GM12878 (cell line): ENCODE measurements at regions of chr19 and their contacts with region 1.

Region 1: DNA sequence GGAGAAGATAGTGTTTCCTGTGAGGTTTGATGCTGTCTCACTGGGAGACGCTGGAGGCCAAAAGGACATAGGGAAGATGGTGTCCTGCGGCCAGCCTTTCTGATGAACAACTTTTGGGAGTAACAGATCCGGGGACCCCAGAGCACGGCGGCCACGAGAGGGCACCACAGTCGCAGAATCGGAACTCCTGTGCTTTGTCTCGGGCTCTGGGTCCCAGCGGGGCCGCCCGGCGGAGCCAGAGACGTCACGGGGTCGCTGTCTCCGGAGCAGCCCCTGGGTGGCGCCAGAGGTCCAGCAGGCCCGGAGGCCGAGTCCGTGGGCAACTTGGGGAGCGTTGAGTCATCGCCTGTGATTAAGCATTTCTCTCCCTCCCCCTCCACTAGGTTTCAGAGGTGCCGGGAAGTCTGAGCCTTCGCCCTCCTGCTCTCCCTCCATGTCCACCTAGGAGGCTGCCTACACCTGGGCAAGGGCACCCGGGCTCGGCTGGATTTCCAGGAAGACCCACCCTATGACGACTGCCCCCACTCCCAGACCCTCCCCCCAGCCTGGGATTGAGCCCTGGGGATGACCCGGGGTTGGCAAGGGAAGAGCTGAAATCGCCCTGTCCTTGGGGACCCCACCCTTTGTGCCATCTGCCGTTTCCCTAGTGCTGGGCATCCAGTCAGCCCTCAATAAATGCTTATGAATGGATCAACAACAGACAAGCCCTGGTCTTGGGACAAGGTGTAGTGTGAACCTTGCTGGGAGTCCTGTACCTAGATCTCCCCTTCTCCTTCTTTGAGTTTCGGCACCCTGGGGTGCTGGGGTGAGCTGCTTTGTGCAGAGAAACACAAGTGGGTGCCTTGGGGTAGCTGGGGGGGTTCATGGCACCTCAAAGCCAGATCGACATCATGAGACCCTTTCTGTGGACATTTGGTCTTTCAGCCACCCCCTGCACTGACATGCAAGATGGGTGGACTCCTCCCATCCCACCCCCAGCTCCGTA is 3.4 kb downstream of the NANOS3 start:
- DNase-seq: peak; percentile 84
- ATAC-seq: peak; percentile 95
- H3K4me3 ChIP-seq: peak overlapping the region; percentile 42
- H3K27ac ChIP-seq: peak overlapping the region; percentile 70
- H3K4me1 ChIP-seq: peaks cover 25% of the 10 kb centered on the region
- H3K27me3 ChIP-seq: no peaks in the 10 kb centered on the region
- CTCF ChIP-seq: peak; percentile 100; a peak in 5 of 6 replicates
- EP300 ChIP-seq: no peak
- POLR2A ChIP-seq: 0 out of 2 replicates have a peak, but pooled peaks have one; percentile 41
- RAD21 ChIP-seq: peak; percentile 98

Region 2: DNA sequence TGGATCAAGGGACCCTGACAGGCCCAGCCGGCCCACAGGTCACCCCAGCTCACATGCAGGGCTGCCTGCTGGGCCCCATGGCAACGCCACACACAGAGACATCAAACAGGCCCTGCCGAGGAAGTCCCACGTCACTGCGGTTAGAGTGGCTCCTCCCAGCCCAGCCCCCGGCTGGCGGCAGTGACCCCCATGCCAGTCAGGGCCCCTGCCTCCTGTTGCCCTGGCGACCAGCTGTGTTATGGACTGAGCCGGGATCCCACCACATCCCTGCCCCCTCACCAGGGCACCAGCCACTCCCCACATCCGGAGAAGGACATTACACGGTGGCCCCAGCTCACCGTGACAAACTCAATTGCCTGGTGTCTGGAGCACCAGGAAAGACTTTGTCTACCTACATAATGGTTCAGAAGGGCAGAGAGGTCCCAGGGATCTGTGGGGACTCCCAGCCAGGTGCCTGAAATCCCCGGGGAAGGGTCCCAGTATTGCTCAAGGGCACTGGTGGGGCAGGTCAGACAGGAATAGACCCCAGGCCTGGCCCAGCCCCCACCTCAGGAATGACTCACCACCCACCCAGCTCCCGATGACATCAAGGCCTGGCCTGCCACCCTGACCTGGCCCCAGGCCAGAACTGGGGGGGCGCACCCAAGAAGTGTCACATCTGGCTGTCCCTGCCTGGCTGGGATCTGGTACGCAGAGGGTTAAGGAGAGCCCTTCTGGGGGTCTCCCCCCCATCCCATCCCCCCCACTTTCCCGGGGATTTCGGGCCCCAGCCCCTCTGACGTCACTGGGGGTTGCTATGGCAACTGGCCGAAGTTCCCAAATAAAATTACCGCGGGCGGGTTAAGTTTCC is 33.6 kb before region 1 on chr19:
- CTCF ChIA-PET with region 1: no interaction called
- POLR2A ChIA-PET with region 1: interaction called, 11 read pairs
- RAD21 ChIA-PET with region 1: interaction called, 3 read pairs
- SMC1A ChIA-PET with region 1: no interaction called
- in situ Hi-C with region 1: no loop called
- intact Hi-C with region 1: no loop called
- DNase-seq: peak; percentile 85
- ATAC-seq: peak; percentile 76
- H3K4me3 ChIP-seq: peak overlapping the region; percentile 64
- H3K27ac ChIP-seq: peak overlapping the region; percentile 91
- H3K4me1 ChIP-seq: peaks cover 41% of the 10 kb centered on the region
- H3K27me3 ChIP-seq: no peaks in the 10 kb centered on the region
- CTCF ChIP-seq: no peak
- EP300 ChIP-seq: peak; percentile 86 to 94
- POLR2A ChIP-seq: peak; percentile 72
- RAD21 ChIP-seq: no peak

Region 3: GRCh38 chr19:14031719-14032480 is 151.5 kb after region 1 on chr19 and contains the start of gene IL27RA:
- CTCF ChIA-PET with region 1: interaction called, 27 read pairs
- POLR2A ChIA-PET with region 1: interaction called, 15 read pairs
- RAD21 ChIA-PET with region 1: interaction called, 24 read pairs
- SMC1A ChIA-PET with region 1: interaction called, 16 read pairs
- in situ Hi-C with region 1: no loop called
- intact Hi-C with region 1: no loop called
- DNase-seq: peak; percentile 40
- ATAC-seq: peak; percentile 85
- H3K4me3 ChIP-seq: peak within 1 kb of the TSS; percentile 97
- H3K27ac ChIP-seq: peak within 1 kb of the TSS; percentile 91
- H3K4me1 ChIP-seq: peaks cover 17% of the 10 kb centered on the region
- H3K27me3 ChIP-seq: no peaks in the 10 kb centered on the region
- CTCF ChIP-seq: peak; percentile 80 to 92 (median 84)
- EP300 ChIP-seq: 0 out of 4 replicates have a peak, but pooled peaks of 1 of the 2 experiments have one; percentile 9
- POLR2A ChIP-seq: peak; percentile 80
- RAD21 ChIP-seq: peak; percentile 67
- polyA plus RNA-seq, gene IL27RA: 8.4 to 13.1 TPM

Region 4: GRCh38 chr19:14059093-14059480 is 178.7 kb after region 1 on chr19:
- CTCF ChIA-PET with region 1: interaction called, 52 read pairs
- POLR2A ChIA-PET with region 1: interaction called, 3 read pairs
- RAD21 ChIA-PET with region 1: interaction called, 4 read pairs
- SMC1A ChIA-PET with region 1: interaction called, 19 read pairs
- in situ Hi-C with region 1: no loop called
- intact Hi-C with region 1: no loop called
- DNase-seq: no peak
- ATAC-seq: peak; percentile 72
- H3K4me3 ChIP-seq: no peak overlapping the region
- H3K27ac ChIP-seq: no peak overlapping the region
- H3K4me1 ChIP-seq: no peaks in the 10 kb centered on the region
- H3K27me3 ChIP-seq: peaks cover 0 to 6% of the 10 kb centered on the region in 2 experiments
- CTCF ChIP-seq: peak; percentile 63 to 87 (median 75)
- EP300 ChIP-seq: no peak
- POLR2A ChIP-seq: no peak
- RAD21 ChIP-seq: peak; percentile 36; the same call in 1 of the 2 replicates

Region 5: GRCh38 chr19:14117668-14118164 is 237.4 kb after region 1 on chr19 and contains the start of gene PRKACA:
- CTCF ChIA-PET with region 1: interaction called, 38 read pairs
- POLR2A ChIA-PET with region 1: no interaction called
- RAD21 ChIA-PET with region 1: interaction called, 11 read pairs
- SMC1A ChIA-PET with region 1: no interaction called
- in situ Hi-C with region 1: no loop called
- intact Hi-C with region 1: no loop called
- DNase-seq: peak; percentile 91
- ATAC-seq: peak; percentile 99
- H3K4me3 ChIP-seq: peak within 1 kb of the TSS; percentile 70
- H3K27ac ChIP-seq: peak within 1 kb of the TSS; percentile 45
- H3K4me1 ChIP-seq: peaks cover 16% of the 10 kb centered on the region
- H3K27me3 ChIP-seq: no peaks in the 10 kb centered on the region
- CTCF ChIP-seq: no peak
- EP300 ChIP-seq: no peak
- POLR2A ChIP-seq: peak; percentile 54; the same call in 1 of the 2 replicates
- RAD21 ChIP-seq: no peak
- polyA plus RNA-seq, gene PRKACA: 0.53 to 1.3 TPM

Region 6: GRCh38 chr19:14347999-14348889 is 467.9 kb after region 1 on chr19:
- CTCF ChIA-PET with region 1: no interaction called
- POLR2A ChIA-PET with region 1: no interaction called
- RAD21 ChIA-PET with region 1: no interaction called
- SMC1A ChIA-PET with region 1: interaction called, 3 read pairs
- in situ Hi-C with region 1: loop called (anchors 25 kb)
- intact Hi-C with region 1: no loop called
- DNase-seq: no peak
- ATAC-seq: peak; percentile 90
- H3K4me3 ChIP-seq: no peak overlapping the region
- H3K27ac ChIP-seq: no peak overlapping the region; the same call in 1 of the 2 replicates
- H3K4me1 ChIP-seq: peaks cover 9% of the 10 kb centered on the region
- H3K27me3 ChIP-seq: no peaks in the 10 kb centered on the region
- CTCF ChIP-seq: peak; percentile 97 to 99 (median 98)
- EP300 ChIP-seq: no peak
- POLR2A ChIP-seq: no peak
- RAD21 ChIP-seq: peak; percentile 98